ENCODE measurements at regions of chr14 and their contacts with region 1.

Region 1: DNA sequence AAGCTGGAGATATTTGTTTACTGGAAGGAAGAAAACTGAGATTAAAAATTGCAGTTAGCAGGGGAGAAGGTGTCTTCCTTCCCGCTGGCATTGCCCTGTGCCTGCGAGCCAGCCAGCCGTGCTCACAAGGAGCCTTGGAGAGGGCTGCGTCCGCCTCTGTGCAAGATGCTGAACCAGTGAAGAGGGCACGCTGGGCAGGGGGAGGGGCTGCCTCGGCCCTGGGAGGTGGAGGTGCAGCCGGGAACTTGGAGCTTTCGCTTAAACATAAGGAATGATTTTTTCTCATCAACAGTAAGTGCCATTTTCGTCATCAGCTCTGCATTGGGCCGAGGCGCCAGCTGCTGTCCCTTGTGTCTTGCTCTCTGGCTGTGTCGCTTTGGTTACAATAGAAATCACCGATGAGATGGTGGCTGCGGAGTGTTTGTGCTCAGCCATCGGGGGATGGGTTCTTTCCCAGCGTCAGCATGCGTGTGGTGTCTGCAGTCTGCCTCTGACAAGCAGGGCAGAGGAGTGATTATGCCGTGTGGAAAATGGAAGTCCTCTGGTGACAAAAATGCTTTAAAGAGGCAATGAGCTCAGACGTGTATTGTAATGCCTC is 97.3 kb downstream of the ESR2 start:
- DNase-seq: no peak
- ATAC-seq: no peak
- H3K4me3 ChIP-seq: no peak overlapping the region
- H3K27ac ChIP-seq: no peak overlapping the region
- H3K4me1 ChIP-seq: peaks cover 4% of the 10 kb centered on the region; the same call in 1 of the 2 replicates
- H3K27me3 ChIP-seq: no peaks in the 10 kb centered on the region
- CTCF ChIP-seq: no peak

Region 2: DNA sequence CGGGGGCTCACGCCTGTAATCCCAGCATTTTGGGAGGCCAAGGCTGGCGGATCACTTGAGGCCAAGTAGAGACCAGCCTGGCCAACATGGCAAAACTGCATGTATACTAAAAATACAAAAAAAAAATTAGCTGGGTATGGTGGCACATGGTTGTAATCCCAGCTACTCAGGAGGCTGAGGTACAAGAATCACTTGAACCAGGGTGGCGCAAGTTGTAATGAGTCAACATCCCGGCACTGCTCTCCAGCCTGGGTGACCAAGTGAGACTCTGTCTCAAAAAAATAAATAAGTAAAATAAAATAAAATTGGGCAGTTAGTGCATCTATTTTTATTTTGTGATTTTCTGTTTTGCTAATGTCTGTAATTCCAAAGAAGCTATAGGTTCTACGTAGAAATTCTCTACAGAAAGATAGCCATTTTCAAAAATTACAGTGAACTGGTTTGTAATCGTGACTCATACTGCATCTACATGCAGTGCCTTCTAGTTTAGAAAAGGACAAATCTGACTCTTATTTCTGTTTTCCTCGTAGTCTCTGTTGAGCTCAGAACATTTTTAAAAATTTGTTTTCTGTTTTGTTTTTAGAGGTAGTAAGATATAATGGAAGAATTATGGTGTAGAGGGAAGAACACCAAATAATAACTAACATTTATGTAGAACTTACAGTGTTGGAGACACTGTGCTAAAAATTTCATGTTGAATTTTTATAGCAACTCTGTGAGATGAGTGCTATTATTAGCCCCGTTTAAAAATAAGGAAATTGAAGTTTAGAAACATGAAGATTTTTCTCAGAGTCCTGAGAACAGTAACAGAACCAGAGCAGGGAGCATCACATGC is 143.0 kb before region 1 on chr14:
- CTCF ChIA-PET with region 1: interaction called, 10 read pairs
- POLR2A ChIA-PET with region 1: no interaction called
- intact Hi-C with region 1: no loop called
- DNase-seq: peak; percentile 11
- ATAC-seq: peak; percentile 27; the same call in 1 of the 2 replicates
- H3K4me3 ChIP-seq: no peak overlapping the region
- H3K27ac ChIP-seq: no peak overlapping the region
- H3K4me1 ChIP-seq: no peaks in the 10 kb centered on the region
- H3K27me3 ChIP-seq: no peaks in the 10 kb centered on the region
- CTCF ChIP-seq: no peak

Measured in PC-3 (cell line).